Left ventricle myocardium inferior (tissue), 1 donor: ENCODE measurements at regions of chr15 and their contacts with region 1.

Region 1: GRCh38 chr15:90603893-90604292 is 74.2 kb downstream of the CRTC3 start:
- DNase-seq: peak; percentile 51
- H3K4me3 ChIP-seq: no peak overlapping the region
- H3K27ac ChIP-seq: no peak overlapping the region
- H3K4me1 ChIP-seq: peaks cover 14% of the 10 kb centered on the region
- H3K27me3 ChIP-seq: no peaks in the 10 kb centered on the region
- CTCF ChIP-seq: peak; percentile 53

Region 2: DNA sequence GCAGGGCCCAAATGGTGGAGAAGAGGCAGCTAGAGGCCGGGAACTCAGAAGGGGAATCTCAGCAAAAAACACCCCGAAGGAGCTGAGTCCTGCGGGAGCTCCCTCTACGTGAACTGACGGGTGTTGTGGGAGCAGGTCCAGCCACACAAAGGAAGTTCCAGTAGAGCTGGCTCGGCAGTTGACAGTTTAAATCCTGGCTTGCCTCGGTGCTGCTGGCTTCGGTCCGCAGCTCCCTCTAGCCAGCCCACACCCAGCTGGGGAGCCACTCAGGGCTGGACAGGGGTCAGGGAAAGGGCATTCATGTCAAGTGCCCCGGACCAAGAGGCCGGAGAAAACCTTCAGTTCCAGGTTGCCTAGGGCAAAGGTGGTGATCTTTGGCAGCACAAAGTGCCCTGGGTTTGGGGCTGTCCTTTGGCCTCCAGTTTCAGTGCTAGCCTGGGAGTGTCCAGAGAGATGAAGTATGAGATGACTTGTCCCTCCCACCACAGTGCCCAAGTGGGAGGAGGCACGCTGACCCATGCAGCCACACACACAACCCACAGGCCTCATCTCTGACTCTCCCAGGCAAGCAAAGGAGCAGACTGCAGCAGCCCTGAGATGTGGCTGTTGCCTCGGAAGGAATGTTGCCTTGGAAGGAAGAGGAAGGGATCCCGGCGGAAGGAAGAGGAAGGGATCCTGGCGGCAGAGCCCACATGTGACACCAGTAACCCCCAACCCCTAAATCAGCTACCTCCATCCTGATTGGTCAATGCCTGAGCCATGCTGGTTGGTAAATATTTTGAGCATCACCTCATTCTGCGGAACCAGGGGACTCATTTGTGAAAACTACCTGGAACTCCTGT is 775.4 kb before region 1 on chr15:
- intact Hi-C with region 1: no loop called
- DNase-seq: peak; percentile 67
- H3K4me3 ChIP-seq: peak overlapping the region; percentile 10
- H3K27ac ChIP-seq: peak overlapping the region; percentile 61
- H3K4me1 ChIP-seq: peaks cover 18% of the 10 kb centered on the region
- H3K27me3 ChIP-seq: no peaks in the 10 kb centered on the region
- CTCF ChIP-seq: no peak

Region 3: GRCh38 chr15:90529371-90530249 is 74.3 kb before region 1 on chr15 and contains the start of gene CRTC3:
- intact Hi-C with region 1: loop called (anchors 5 kb)
- DNase-seq: peak; percentile 56
- H3K4me3 ChIP-seq: peak within 1 kb of the TSS; percentile 94
- H3K27ac ChIP-seq: peak within 1 kb of the TSS; percentile 97
- H3K4me1 ChIP-seq: peaks cover 51% of the 10 kb centered on the region
- H3K27me3 ChIP-seq: no peaks in the 10 kb centered on the region
- CTCF ChIP-seq: no peak
- total RNA-seq, gene CRTC3: 24.1 TPM